A673 (cell line): ENCODE measurements at regions of chr1 and their contacts with region 1.

Region 1: GRCh38 chr1:184664042-184664655 is 90.5 kb downstream of the EDEM3 start:
- DNase-seq: peak; percentile 88
- H3K4me3 ChIP-seq: no peak overlapping the region
- H3K27ac ChIP-seq: no peak overlapping the region
- H3K4me1 ChIP-seq: peaks cover 5% of the 10 kb centered on the region
- H3K27me3 ChIP-seq: no peaks in the 10 kb centered on the region
- CTCF ChIP-seq: peak; percentile 96

Region 2: DNA sequence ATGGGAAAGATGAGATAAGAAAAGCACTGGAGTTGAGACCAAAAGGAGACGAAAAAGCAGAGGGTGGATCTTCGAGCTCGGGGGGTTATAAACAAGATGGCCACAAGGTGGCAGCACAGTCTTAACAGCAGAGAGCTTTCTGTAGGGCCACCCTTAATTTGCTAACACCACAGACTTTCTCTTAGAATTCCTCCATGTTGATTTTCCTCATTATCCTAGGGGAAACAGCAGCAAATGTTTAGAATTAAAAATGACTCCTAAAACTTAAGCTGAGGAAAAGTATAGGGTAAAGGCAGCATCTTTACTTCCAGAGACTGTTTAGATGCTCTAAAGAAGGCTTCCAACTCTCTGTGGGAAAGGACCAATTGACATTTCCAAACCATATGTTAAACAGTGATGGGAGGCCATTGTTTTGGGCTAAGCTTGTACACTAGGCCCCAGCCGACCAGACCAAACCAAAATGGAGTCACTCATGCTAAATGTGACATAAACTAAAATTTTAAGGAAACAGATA is 1008.5 kb before region 1 on chr1:
- CTCF ChIA-PET with region 1: interaction called, 4 read pairs
- POLR2A ChIA-PET with region 1: no interaction called
- intact Hi-C with region 1: loop called (anchors 10 kb)
- DNase-seq: peak; percentile 93
- H3K4me3 ChIP-seq: no peak overlapping the region
- H3K27ac ChIP-seq: peak overlapping the region; percentile 50
- H3K4me1 ChIP-seq: peaks cover 42% of the 10 kb centered on the region
- H3K27me3 ChIP-seq: no peaks in the 10 kb centered on the region
- CTCF ChIP-seq: peak; percentile 95

Region 3: DNA sequence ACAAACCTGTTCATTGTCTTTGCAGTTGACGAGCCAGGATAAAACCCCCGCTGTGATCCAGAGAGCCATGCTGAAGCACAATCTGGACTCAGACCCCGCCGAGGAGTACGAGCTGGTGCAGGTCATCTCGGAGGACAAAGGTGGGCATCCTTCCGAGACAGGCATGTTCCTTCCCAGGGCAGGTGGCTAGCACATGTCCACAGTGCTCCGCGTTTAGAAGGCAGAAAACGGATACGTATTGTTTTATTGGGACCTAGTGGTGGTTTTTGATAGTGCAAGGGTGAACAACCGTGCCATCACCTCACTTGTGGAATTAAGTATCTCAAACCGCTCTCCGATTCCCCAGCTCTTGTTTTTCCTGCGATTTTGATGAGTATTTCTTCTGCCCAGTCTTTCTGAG is 742.0 kb before region 1 on chr1:
- CTCF ChIA-PET with region 1: no interaction called
- POLR2A ChIA-PET with region 1: no interaction called
- intact Hi-C with region 1: loop called (anchors 10 kb)
- DNase-seq: no peak
- H3K4me3 ChIP-seq: no peak overlapping the region
- H3K27ac ChIP-seq: no peak overlapping the region
- H3K4me1 ChIP-seq: peaks cover 15% of the 10 kb centered on the region
- H3K27me3 ChIP-seq: no peaks in the 10 kb centered on the region
- CTCF ChIP-seq: peak; percentile 38

Region 4: DNA sequence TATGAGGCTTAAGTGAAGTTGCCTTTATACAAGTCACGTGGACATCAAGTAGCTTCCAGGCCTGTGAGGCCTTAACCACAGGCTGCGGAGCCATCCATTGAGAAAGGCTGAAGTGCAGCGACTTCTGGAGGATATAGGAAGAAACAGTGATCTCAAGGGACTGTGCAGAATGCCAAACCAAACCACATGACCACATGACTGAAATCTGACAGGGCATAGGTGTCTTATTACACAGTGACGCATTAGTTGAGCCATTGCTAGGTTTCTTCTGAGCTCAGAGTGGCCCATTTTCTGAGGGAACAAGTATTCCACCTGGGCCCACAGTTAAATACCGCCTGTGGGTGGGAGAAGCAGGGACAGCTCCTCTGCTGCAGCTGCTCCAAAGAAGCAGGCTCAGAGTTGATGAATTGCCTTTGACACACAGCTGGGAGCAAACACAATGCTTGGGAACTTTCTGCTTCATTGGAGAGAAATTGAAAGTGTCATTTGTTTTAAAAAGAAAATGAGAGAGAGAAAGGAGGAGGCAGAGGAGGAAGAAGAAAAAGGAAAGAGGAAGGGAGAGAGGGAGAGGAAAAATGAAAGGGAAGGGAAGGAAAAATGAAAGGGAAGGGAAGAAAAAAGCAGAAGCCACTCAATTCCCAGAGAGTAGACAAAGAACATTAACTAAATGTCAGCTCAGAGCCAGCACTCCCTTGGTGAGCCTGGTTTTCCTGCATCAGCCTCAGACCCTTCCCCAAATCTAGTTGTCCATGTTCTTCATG is 721.0 kb before region 1 on chr1:
- CTCF ChIA-PET with region 1: interaction called, 11 read pairs
- POLR2A ChIA-PET with region 1: no interaction called
- intact Hi-C with region 1: no loop called
- DNase-seq: peak; percentile 96
- H3K4me3 ChIP-seq: no peak overlapping the region
- H3K27ac ChIP-seq: peak overlapping the region; percentile 74
- H3K4me1 ChIP-seq: peaks cover 22% of the 10 kb centered on the region
- H3K27me3 ChIP-seq: no peaks in the 10 kb centered on the region
- CTCF ChIP-seq: peak; percentile 54

Region 5: GRCh38 chr1:184222652-184223052 is 441.5 kb before region 1 on chr1:
- CTCF ChIA-PET with region 1: interaction called, 3 read pairs
- POLR2A ChIA-PET with region 1: no interaction called
- intact Hi-C with region 1: loop called (anchors 10 kb)
- DNase-seq: peak; percentile 74
- H3K4me3 ChIP-seq: no peak overlapping the region
- H3K27ac ChIP-seq: no peak overlapping the region
- H3K4me1 ChIP-seq: peaks cover 22% of the 10 kb centered on the region
- H3K27me3 ChIP-seq: no peaks in the 10 kb centered on the region
- CTCF ChIP-seq: peak; percentile 95

Region 6: DNA sequence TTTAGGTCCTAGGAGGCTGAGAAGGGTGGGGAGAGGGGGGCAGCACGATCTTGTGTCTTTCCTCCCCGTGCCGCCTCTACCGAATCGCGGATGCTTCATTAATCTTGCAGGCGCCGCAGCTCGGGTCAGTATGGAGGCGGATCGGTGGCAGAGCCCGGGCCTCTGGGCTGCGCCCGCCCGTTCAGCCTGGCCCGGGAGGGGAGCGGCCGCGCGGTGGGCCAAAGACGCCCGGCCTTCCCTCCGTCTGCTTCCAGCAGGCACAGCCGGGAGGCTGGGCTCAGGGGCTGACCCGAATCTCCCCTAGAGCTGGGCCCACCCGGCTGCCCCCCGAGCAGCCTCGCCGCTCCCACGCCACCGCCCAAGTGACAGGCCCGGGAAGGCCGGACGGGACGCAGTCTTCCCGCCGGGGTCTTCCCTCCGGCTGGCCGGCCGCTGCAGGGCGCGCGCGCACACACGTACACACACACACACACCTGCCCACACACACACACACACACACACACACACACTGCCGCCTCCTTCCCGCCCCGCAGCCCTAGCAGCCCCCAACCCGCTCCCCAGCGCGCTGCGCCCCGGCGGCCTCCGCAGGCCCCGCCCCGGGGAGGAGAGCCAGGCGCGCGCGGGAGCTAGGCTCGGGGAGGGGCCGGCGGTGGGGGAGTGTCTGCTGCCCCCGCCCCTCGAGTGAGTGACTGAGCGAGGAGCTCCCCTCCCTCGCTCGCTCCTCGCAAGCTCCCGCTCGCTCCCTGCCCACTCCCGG is 277.7 kb before region 1 on chr1 and contains the start of gene C1orf21:
- CTCF ChIA-PET with region 1: interaction called, 12 read pairs
- POLR2A ChIA-PET with region 1: interaction called, 6 read pairs
- intact Hi-C with region 1: loop called (anchors 10 kb)
- DNase-seq: peak; percentile 96
- H3K4me3 ChIP-seq: peak within 1 kb of the TSS; percentile 95
- H3K27ac ChIP-seq: peak within 1 kb of the TSS; percentile 79
- H3K4me1 ChIP-seq: peaks cover 25% of the 10 kb centered on the region
- H3K27me3 ChIP-seq: no peaks in the 10 kb centered on the region
- CTCF ChIP-seq: no peak
- total RNA-seq, gene C1orf21: 31.3 and 34.3 TPM in 2 replicates